ENCODE measurements at regions of chr9 and their contacts with region 1.

Region 1: GRCh38 chr9:115035841-115036612 is 81.9 kb downstream of the TNC start:
- DNase-seq: peak in 1 of 9 donors; percentile 42
- ATAC-seq: peak; percentile 37
- H3K4me3 ChIP-seq: no peak overlapping the region
- H3K4me3 Mint-ChIP-seq: peak overlapping the region in 1 of 10 donors; percentile 41
- H3K27ac ChIP-seq: no peak overlapping the region
- H3K27ac Mint-ChIP-seq: peak overlapping the region in 1 of 9 donors; percentile 34
- H3K4me1 ChIP-seq: no peaks in the 10 kb centered on the region
- H3K4me1 Mint-ChIP-seq: peaks cover 0 to 14% (median 0%) of the 10 kb centered on the region in 7 donors
- H3K27me3 ChIP-seq: no peaks in the 10 kb centered on the region
- H3K27me3 Mint-ChIP-seq: peaks cover 0 to 5% (median 0%) of the 10 kb centered on the region in 5 donors

Region 2: GRCh38 chr9:115204904-115205453 is 169.0 kb after region 1 on chr9:
- CTCF ChIA-PET with region 1: no interaction called
- POLR2A ChIA-PET with region 1: no interaction called
- intact Hi-C with region 1: loop called in 1 of 2 experiments (anchors 10 kb)
- DNase-seq: no peak
- ATAC-seq: no peak
- H3K4me3 ChIP-seq: no peak overlapping the region
- H3K4me3 Mint-ChIP-seq: no peak overlapping the region
- H3K27ac ChIP-seq: no peak overlapping the region
- H3K27ac Mint-ChIP-seq: no peak overlapping the region
- H3K4me1 ChIP-seq: no peaks in the 10 kb centered on the region
- H3K4me1 Mint-ChIP-seq: peaks cover 0 to 39% (median 0%) of the 10 kb centered on the region in 7 donors
- H3K27me3 ChIP-seq: no peaks in the 10 kb centered on the region
- H3K27me3 Mint-ChIP-seq: peaks cover 18 to 48% (median 37%) of the 10 kb centered on the region in 5 donors

Measured in naive thymus-derived CD4-positive, alpha-beta T cell (primary cell).